ENCODE measurements at regions of chr6 and their contacts with region 1.

Region 1: DNA sequence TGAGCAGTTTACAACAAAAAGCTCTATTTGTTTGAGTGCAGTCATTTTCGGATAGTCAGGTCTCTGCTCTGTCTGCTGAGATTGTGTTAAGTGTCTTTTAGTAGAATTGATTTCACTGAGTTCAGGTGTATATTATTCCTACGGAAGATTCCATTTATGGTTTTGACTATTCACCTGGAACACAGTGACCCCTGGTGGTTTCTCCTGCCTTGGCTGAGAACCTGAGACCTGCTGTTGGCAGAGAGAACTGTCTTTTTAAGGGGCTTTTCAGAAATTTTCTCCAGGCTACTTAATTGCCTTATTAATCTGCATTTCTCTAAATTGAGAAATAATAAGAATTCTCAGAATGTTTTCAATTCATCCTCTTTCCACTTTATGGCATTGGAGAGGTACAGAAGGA is 508.0 kb downstream of the TBC1D32 start:
- DNase-seq: peak; percentile 61
- H3K4me3 Mint-ChIP-seq: no peak overlapping the region
- H3K27ac Mint-ChIP-seq: no peak overlapping the region
- H3K4me1 Mint-ChIP-seq: no peaks in the 10 kb centered on the region
- H3K27me3 Mint-ChIP-seq: no peaks in the 10 kb centered on the region
- CTCF ChIP-seq: peak; percentile 54

Region 2: DNA sequence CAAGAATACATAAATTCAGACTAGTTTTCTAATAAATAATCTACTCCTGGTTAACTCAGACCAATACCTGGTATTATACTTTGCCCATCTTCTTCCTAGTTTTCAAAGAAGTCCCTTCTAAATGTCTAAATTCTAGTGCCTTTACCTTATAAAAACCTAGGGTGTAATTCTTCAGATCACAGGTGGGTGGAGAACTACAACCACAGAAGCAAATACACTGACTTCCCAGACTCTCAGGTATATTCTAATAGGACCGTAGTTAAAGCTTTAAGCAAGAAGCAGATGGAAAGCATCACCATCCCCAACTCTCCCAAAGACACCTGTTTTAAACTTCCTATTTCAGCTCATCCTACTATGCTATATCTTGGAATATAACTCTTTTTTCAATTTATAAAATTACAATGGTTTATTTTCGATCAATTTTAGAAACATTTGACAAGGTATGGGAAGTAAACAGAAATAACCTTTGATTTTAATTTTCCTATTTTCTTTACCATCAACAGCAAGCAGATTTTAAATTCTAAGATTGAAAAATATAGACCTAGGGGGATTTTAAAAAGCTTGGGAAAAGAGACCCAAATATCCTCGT is 1492.5 kb before region 1 on chr6:
- CTCF ChIA-PET with region 1: interaction called, 4 read pairs
- POLR2A ChIA-PET with region 1: no interaction called
- intact Hi-C with region 1: loop called (anchors 5 kb)
- DNase-seq: peak; percentile 44
- H3K4me3 Mint-ChIP-seq: no peak overlapping the region
- H3K27ac Mint-ChIP-seq: no peak overlapping the region
- H3K4me1 Mint-ChIP-seq: no peaks in the 10 kb centered on the region
- H3K27me3 Mint-ChIP-seq: no peaks in the 10 kb centered on the region
- CTCF ChIP-seq: peak; percentile 45

Region 3: GRCh38 chr6:119978274-119978889 is 847.9 kb before region 1 on chr6:
- CTCF ChIA-PET with region 1: interaction called, 6 read pairs
- POLR2A ChIA-PET with region 1: no interaction called
- intact Hi-C with region 1: loop called (anchors 10 kb)
- DNase-seq: peak; percentile 33
- H3K4me3 Mint-ChIP-seq: no peak overlapping the region
- H3K27ac Mint-ChIP-seq: no peak overlapping the region
- H3K4me1 Mint-ChIP-seq: no peaks in the 10 kb centered on the region
- H3K27me3 Mint-ChIP-seq: no peaks in the 10 kb centered on the region
- CTCF ChIP-seq: peak; percentile 50

Region 4: GRCh38 chr6:120405947-120406346 is 420.3 kb before region 1 on chr6:
- CTCF ChIA-PET with region 1: interaction called, 3 read pairs
- POLR2A ChIA-PET with region 1: no interaction called
- intact Hi-C with region 1: loop called (anchors 2 kb)
- DNase-seq: peak; percentile 24
- H3K4me3 Mint-ChIP-seq: no peak overlapping the region
- H3K27ac Mint-ChIP-seq: no peak overlapping the region
- H3K4me1 Mint-ChIP-seq: no peaks in the 10 kb centered on the region
- H3K27me3 Mint-ChIP-seq: no peaks in the 10 kb centered on the region
- CTCF ChIP-seq: peak; percentile 24

Region 5: GRCh38 chr6:120852293-120852849 is 26.1 kb after region 1 on chr6:
- CTCF ChIA-PET with region 1: no interaction called
- POLR2A ChIA-PET with region 1: no interaction called
- intact Hi-C with region 1: no loop called
- DNase-seq: no peak
- H3K4me3 Mint-ChIP-seq: no peak overlapping the region
- H3K27ac Mint-ChIP-seq: no peak overlapping the region
- H3K4me1 Mint-ChIP-seq: no peaks in the 10 kb centered on the region
- H3K27me3 Mint-ChIP-seq: no peaks in the 10 kb centered on the region
- CTCF ChIP-seq: no peak

Region 6: DNA sequence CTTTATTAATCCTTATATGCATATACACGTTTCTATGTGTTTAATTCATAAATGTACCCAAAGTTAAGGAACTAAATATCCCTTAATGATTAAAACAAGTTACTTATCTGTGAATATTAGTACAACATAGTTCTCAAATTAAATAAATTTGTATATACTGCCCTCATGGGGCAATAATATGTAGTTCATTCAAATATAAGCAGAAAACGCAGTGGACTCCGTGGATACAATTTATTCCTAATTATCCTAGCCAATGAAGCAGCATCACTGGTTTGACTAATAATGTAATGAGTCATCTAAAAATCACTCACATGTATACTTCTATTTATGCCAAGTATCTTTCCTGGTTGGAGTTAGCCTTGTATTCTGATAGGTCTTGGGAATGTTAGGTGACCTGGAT is 396.4 kb after region 1 on chr6:
- CTCF ChIA-PET with region 1: no interaction called
- POLR2A ChIA-PET with region 1: no interaction called
- intact Hi-C with region 1: loop called (anchors 10 kb)
- DNase-seq: peak; percentile 48
- H3K4me3 Mint-ChIP-seq: no peak overlapping the region
- H3K27ac Mint-ChIP-seq: no peak overlapping the region
- H3K4me1 Mint-ChIP-seq: no peaks in the 10 kb centered on the region
- H3K27me3 Mint-ChIP-seq: no peaks in the 10 kb centered on the region
- CTCF ChIP-seq: peak; percentile 36